ENCODE measurements at regions of chr10 and their contacts with region 1.

Region 1: GRCh38 chr10:102322914-102323313 is 72.6 kb upstream of the NFKB2 start:
- DNase-seq: peak; percentile 3 to 59 (median 27)
- ATAC-seq: peak; percentile 58 to 83 (median 78)
- H3K4me3 ChIP-seq: no peak overlapping the region
- H3K4me3 Mint-ChIP-seq: no peak overlapping the region
- H3K27ac ChIP-seq: no peak overlapping the region
- H3K27ac Mint-ChIP-seq: no peak overlapping the region
- H3K4me1 ChIP-seq: peaks cover 8 to 16% of the 10 kb centered on the region in 2 experiments
- H3K4me1 Mint-ChIP-seq: peaks cover 39 to 44% (median 41%) of the 10 kb centered on the region in 3 donors
- H3K27me3 ChIP-seq: no peaks in the 10 kb centered on the region
- H3K27me3 Mint-ChIP-seq: no peaks in the 10 kb centered on the region

Region 2: GRCh38 chr10:102211615-102212299 is 111.2 kb before region 1 on chr10:
- CTCF ChIA-PET with region 1: no interaction called
- POLR2A ChIA-PET with region 1: interaction called in 1 of 2 experiments, 13 read pairs
- DNase-seq: no peak
- ATAC-seq: no peak
- H3K4me3 ChIP-seq: no peak overlapping the region
- H3K4me3 Mint-ChIP-seq: no peak overlapping the region
- H3K27ac ChIP-seq: no peak overlapping the region
- H3K27ac Mint-ChIP-seq: no peak overlapping the region
- H3K4me1 ChIP-seq: no peaks in the 10 kb centered on the region
- H3K4me1 Mint-ChIP-seq: no peaks in the 10 kb centered on the region
- H3K27me3 ChIP-seq: peaks cover 0 to 4% of the 10 kb centered on the region in 2 experiments
- H3K27me3 Mint-ChIP-seq: peaks cover 0 to 4% of the 10 kb centered on the region in 2 donors

Region 3: GRCh38 chr10:102334101-102334500 is 11.2 kb after region 1 on chr10:
- CTCF ChIA-PET with region 1: no interaction called
- POLR2A ChIA-PET with region 1: interaction called in 1 of 2 experiments, 15 read pairs
- DNase-seq: no peak
- ATAC-seq: no peak
- H3K4me3 ChIP-seq: no peak overlapping the region
- H3K4me3 Mint-ChIP-seq: no peak overlapping the region
- H3K27ac ChIP-seq: no peak overlapping the region
- H3K27ac Mint-ChIP-seq: no peak overlapping the region
- H3K4me1 ChIP-seq: no peaks in the 10 kb centered on the region
- H3K4me1 Mint-ChIP-seq: peaks cover 0 to 5% (median 1%) of the 10 kb centered on the region in 3 donors
- H3K27me3 ChIP-seq: no peaks in the 10 kb centered on the region
- H3K27me3 Mint-ChIP-seq: no peaks in the 10 kb centered on the region

Region 4: GRCh38 chr10:102615361-102615760 is 292.4 kb after region 1 on chr10:
- CTCF ChIA-PET with region 1: no interaction called
- POLR2A ChIA-PET with region 1: no interaction called
- DNase-seq: peak in 6 of 35 experiments; percentile 7 to 43 (median 14)
- ATAC-seq: no peak
- H3K4me3 ChIP-seq: no peak overlapping the region
- H3K4me3 Mint-ChIP-seq: no peak overlapping the region
- H3K27ac ChIP-seq: no peak overlapping the region
- H3K27ac Mint-ChIP-seq: no peak overlapping the region
- H3K4me1 ChIP-seq: peaks cover 28 to 37% of the 10 kb centered on the region in 2 experiments
- H3K4me1 Mint-ChIP-seq: peaks cover 30 to 36% (median 31%) of the 10 kb centered on the region in 3 donors
- H3K27me3 ChIP-seq: no peaks in the 10 kb centered on the region
- H3K27me3 Mint-ChIP-seq: no peaks in the 10 kb centered on the region

Region 5: GRCh38 chr10:102629661-102630614 is 307.0 kb after region 1 on chr10:
- CTCF ChIA-PET with region 1: no interaction called
- POLR2A ChIA-PET with region 1: no interaction called
- DNase-seq: no peak
- ATAC-seq: no peak
- H3K4me3 ChIP-seq: no peak overlapping the region
- H3K4me3 Mint-ChIP-seq: no peak overlapping the region
- H3K27ac ChIP-seq: no peak overlapping the region
- H3K27ac Mint-ChIP-seq: no peak overlapping the region
- H3K4me1 ChIP-seq: peaks cover 24 to 31% of the 10 kb centered on the region in 2 experiments
- H3K4me1 Mint-ChIP-seq: peaks cover 26 to 34% (median 33%) of the 10 kb centered on the region in 3 donors
- H3K27me3 ChIP-seq: no peaks in the 10 kb centered on the region
- H3K27me3 Mint-ChIP-seq: no peaks in the 10 kb centered on the region